ENCODE measurements at regions of chr5 and their contacts with region 1.

Region 1: DNA sequence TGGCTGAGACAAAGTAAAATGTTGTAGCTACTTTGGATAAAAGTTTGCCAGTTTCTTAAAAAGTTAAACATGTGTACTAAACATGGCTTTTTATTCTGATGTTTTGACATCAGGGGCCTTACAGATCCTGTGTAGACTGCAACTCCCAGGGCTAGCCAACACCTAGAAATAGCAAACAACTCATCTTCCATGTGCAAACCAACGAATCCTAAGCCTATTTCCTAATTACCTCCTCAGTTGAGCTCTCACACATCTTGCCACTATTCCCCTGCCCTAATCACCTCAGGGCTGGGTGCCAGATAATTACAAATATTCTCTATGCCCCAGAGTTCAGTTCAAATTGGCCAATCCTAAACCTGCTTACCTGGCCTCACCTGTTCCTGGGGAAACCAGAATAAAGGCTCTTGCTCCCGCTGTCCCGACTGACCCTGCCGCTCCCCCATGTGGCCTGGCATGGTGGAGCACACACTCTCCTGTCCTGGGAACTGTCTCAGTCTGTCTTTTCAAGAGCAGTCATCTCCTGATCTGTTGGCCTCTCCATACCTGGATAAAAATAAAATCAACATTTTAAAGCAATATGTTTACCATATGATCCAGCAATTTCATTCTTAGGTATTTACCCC is 37.1 kb upstream of the FAM169A start:
- DNase-seq: peak; percentile 71 to 81
- H3K4me3 ChIP-seq: no peak overlapping the region
- H3K27ac ChIP-seq: no peak overlapping the region
- H3K4me1 ChIP-seq: peaks cover 0 to 6% (median 3%) of the 10 kb centered on the region in 4 experiments; a peak in 4 of 7 replicates
- H3K27me3 ChIP-seq: no peaks in the 10 kb centered on the region
- CTCF ChIP-seq: peak; percentile 88 to 95 (median 91)
- EP300 ChIP-seq: no peak
- POLR2A ChIP-seq: no peak
- RAD21 ChIP-seq: peak; percentile 98

Region 2: DNA sequence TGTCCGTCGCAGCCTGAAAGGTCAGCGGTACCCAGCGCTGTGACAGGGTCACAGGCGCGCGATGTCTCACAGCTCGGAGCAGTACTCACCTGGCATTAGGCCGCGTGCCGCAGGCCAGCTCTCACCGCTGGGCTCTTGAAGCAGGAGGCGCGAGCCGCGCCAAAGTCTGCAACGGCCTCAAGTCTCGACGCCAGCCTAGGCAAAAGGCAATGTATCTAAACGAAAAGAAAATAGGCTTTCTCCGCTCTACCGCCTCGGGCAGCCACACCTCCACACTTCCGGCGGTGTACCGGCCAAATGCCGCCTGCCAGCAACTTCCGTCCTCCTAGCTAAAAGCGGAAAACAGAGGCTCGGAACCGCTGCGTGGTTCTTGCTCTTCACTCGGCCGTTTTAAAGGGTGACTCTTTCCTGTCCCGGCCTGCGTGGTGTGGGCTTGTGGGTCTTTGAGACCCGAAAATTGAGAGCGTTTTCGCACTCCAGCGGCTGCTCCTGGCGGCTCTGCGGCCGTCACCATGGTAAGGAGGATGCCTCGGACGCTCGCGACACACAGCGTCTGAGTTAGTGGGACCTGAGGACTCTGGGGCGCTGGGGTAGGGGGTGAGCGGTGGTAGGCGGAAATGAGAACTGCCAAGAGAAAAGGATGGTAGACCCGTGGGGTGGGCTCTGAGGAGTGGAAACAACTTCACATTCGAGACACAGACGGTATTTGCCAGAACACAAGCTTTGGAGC is 136.3 kb before region 1 on chr5 and contains the starts of genes GFM2 and NSA2:
- CTCF ChIA-PET with region 1: interaction called, 10 read pairs
- POLR2A ChIA-PET with region 1: no interaction called
- DNase-seq: peak; percentile 84 to 95
- H3K4me3 ChIP-seq: peak within 1 kb of the TSS; percentile 86 to 100 (median 93)
- H3K27ac ChIP-seq: peak within 1 kb of the TSS; percentile 31; the same call in 1 of the 2 replicates
- H3K4me1 ChIP-seq: peaks cover 0 to 4% (median 2%) of the 10 kb centered on the region in 4 experiments; a peak in 2 of 7 replicates
- H3K27me3 ChIP-seq: no peaks in the 10 kb centered on the region
- CTCF ChIP-seq: no peak
- EP300 ChIP-seq: 0 out of 3 replicates have a peak, but pooled peaks of 1 of the 2 experiments have one; percentile 45
- POLR2A ChIP-seq: peak in 1 of 2 experiments; percentile 69; a peak in 1 of 3 replicates
- RAD21 ChIP-seq: 0 out of 4 replicates have a peak, but pooled peaks have one; percentile 0 to 4
- total RNA-seq, gene GFM2: 29.5 and 30.6 TPM in 2 replicates
- total RNA-seq, gene NSA2: 66.6 and 68.7 TPM in 2 replicates

Region 3: DNA sequence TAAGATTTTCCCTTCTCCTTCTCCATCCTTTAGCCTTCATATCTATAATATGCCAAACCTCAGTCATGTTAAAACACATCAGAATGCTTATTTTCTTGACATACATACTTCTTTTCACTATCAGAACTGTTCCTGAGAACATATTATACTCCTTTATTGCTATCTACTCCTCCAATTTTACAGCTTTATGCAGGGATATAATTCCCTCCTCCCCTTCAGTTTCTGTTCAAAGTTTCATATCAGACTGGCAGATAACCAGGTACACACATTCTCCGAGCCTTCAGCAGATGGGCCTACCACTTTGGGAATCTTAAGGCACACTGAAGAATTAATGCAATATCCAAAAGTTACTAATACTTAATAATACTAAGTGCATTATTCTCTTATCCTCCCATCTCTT is 66.2 kb before region 1 on chr5:
- CTCF ChIA-PET with region 1: interaction called, 10 read pairs
- POLR2A ChIA-PET with region 1: no interaction called
- DNase-seq: no peak
- H3K4me3 ChIP-seq: no peak overlapping the region
- H3K27ac ChIP-seq: no peak overlapping the region
- H3K4me1 ChIP-seq: peaks cover 0 to 3% (median 0%) of the 10 kb centered on the region in 4 experiments; a peak in 2 of 7 replicates
- H3K27me3 ChIP-seq: no peaks in the 10 kb centered on the region
- CTCF ChIP-seq: no peak
- EP300 ChIP-seq: no peak
- POLR2A ChIP-seq: no peak
- RAD21 ChIP-seq: no peak

Region 4: DNA sequence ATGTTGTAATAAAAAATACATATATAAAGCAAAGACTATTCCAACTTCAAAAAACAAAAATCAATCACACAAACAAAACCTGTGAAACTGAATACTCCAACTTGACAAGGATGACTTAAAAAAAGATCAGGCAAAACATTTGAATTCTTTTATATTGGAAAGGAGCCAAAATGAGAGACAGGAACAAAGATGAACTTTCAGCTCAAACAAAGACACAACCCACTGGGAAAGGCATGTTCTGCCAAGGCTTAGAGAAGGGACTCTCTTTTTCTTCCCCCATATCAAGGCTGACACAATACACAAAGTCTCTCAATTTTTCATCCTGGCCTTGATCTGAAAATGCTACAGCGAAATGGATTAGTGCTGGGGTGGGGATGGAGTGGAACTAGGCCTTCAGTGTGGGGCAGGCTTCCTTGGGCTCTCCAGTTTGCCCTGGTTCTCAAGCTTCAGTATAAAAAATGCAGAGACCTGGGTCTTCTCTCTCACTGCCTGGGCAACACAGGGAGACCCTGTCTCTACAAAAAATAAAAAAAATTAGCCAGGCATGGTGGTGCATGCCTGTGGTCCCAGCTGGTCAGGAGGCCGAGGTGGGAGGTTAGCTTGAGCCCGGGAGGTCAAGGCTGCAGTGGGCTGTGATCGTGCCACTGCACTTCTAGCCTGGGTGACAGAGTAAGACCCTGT is 25.5 kb before region 1 on chr5:
- CTCF ChIA-PET with region 1: no interaction called
- POLR2A ChIA-PET with region 1: no interaction called
- DNase-seq: no peak
- H3K4me3 ChIP-seq: no peak overlapping the region
- H3K27ac ChIP-seq: no peak overlapping the region
- H3K4me1 ChIP-seq: peaks cover 0 to 4% (median 1%) of the 10 kb centered on the region in 4 experiments; a peak in 2 of 7 replicates
- H3K27me3 ChIP-seq: no peaks in the 10 kb centered on the region
- CTCF ChIP-seq: no peak
- EP300 ChIP-seq: no peak
- POLR2A ChIP-seq: no peak
- RAD21 ChIP-seq: no peak

Measured in H1 (cell line).